OCI-LY7 (cell line): ENCODE measurements at regions of chr15 and their contacts with region 1.

Region 1: GRCh38 chr15:85330901-85331588 is 49.4 kb upstream of the AKAP13 start:
- DNase-seq: peak; percentile 96
- H3K4me3 ChIP-seq: peak overlapping the region; percentile 68
- H3K27ac ChIP-seq: peak overlapping the region; percentile 99
- H3K4me1 ChIP-seq: peaks cover 64% of the 10 kb centered on the region
- CTCF ChIP-seq: peak; percentile 95

Region 2: DNA sequence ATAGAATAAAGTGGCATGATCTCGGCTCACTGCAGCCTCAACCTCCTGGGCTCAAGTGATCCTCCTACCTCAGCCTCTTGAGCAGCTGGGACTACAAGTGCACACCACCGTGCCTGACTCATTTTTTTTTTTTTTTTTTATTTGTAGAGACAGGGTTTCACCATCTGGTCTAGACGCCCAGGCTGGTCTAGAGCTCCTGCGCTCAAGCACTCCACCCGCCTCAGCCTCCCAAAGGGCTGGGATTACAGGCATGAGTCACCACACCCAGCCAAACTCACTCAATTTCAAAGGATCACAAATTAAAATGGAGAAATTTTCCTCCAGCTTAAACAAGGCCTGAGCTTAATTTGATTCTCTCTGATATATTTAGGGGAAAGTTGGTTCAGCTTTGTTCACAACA is 645.7 kb before region 1 on chr15:
- CTCF ChIA-PET with region 1: no interaction called
- POLR2A ChIA-PET with region 1: no interaction called
- intact Hi-C with region 1: no loop called
- DNase-seq: no peak
- H3K4me3 ChIP-seq: no peak overlapping the region
- H3K27ac ChIP-seq: no peak overlapping the region
- H3K4me1 ChIP-seq: peaks cover 7% of the 10 kb centered on the region
- CTCF ChIP-seq: no peak

Region 3: DNA sequence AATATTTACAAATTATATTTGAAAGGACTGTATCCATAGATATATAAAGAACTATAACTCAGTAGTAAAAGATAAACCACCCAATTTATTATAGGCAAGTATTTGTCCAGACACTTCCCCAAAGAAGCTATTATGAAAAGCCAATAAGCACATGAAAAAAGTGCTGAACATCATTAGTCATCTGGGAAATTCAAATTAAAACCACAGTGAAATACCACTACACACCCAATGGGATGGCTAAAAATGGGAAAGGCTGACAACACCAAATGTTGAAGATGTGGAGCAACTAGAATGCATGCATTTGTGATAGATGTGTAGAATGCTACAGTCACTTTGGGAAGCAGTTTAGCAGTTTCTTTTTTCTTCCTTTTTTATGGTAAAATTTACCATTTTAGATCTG is 202.4 kb before region 1 on chr15:
- CTCF ChIA-PET with region 1: no interaction called
- POLR2A ChIA-PET with region 1: no interaction called
- intact Hi-C with region 1: no loop called
- DNase-seq: no peak
- H3K4me3 ChIP-seq: no peak overlapping the region
- H3K27ac ChIP-seq: no peak overlapping the region
- H3K4me1 ChIP-seq: no peaks in the 10 kb centered on the region
- CTCF ChIP-seq: no peak

Region 4: DNA sequence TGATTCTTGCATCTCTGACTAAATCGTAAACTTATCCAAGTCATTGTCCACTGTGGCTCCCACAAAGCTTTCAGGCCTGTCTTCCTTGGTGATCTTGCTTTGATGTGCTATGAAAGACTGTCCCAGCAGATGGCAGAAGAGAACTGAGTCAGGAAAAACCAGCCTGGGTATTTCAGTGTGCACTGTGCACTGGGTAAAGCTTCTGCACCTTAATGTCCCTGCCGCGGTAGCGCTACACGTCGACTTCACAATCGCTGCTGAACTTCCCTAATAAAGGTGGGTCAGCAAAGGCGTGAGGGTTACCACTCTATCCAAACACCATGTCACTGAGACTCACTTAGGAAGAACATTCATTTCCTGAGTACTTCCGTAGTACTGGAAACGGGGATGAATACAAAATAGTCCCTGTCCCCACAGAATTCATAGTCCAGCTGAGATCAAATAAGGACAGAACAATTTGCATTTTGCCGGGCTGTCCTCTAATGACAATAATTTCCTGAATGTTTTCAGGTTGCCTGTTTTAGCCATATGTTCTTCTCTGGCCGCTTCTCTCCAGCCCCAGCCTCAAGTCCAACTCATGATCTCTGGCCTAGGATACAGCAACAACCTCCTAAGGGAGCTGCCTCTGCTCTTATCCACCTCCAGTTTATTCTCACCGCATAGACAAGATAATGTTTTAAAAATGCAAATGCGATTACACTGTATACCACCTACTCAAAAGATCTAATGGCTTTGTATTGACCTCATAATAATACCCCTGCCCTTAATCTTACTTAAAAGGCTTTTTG is 34.2 kb before region 1 on chr15:
- CTCF ChIA-PET with region 1: interaction called, 8 read pairs
- POLR2A ChIA-PET with region 1: interaction called, 12 read pairs
- intact Hi-C with region 1: loop called (anchors 1 kb)
- DNase-seq: peak; percentile 91
- H3K4me3 ChIP-seq: peak overlapping the region; percentile 37
- H3K27ac ChIP-seq: no peak overlapping the region
- H3K4me1 ChIP-seq: peaks cover 32% of the 10 kb centered on the region
- CTCF ChIP-seq: peak; percentile 93

Region 5: DNA sequence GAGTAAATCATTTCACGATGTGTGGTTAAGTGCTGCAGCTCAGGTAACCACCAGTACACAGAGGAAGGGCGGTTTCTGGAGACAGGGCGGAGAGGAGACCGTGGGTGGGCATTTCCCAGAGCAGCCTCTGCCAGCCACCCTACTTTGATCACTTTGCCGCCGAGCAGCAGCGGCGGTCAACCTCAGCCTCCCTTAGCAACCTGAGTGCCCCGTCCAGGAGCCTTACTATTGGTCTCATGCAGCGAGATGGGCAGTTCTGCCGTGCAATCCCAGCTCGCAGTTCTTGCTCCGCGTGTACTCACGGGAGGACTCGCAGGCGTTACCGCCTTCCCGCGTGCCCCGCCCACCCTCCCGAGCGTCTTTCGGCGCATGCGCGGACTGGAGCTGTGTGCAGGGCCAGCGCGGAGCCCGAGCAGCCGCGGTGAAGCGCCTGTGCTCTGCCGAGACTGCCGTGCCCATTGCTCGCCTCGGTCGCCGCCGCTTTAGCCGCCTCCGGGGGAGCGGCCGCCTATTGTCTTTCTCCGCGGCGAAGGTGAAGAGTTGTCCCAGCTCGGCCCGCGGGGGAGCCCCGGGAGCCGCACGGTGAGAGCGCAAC is 49.3 kb after region 1 on chr15 and contains the start of gene AKAP13:
- CTCF ChIA-PET with region 1: interaction called, 4 read pairs
- POLR2A ChIA-PET with region 1: interaction called, 39 read pairs
- intact Hi-C with region 1: loop called (anchors 1 kb)
- DNase-seq: peak; percentile 100
- H3K4me3 ChIP-seq: peak within 1 kb of the TSS; percentile 86
- H3K27ac ChIP-seq: peak within 1 kb of the TSS; percentile 88
- H3K4me1 ChIP-seq: peaks cover 32% of the 10 kb centered on the region
- CTCF ChIP-seq: no peak
- total RNA-seq, gene AKAP13: 124 and 140 TPM in 2 replicates

Region 6: GRCh38 chr15:85412956-85413854 is 82.2 kb after region 1 on chr15:
- CTCF ChIA-PET with region 1: interaction called, 24 read pairs
- POLR2A ChIA-PET with region 1: interaction called, 109 read pairs
- intact Hi-C with region 1: loop called (anchors 1 kb)
- DNase-seq: peak; percentile 90
- H3K4me3 ChIP-seq: peak overlapping the region; percentile 49
- H3K27ac ChIP-seq: peak overlapping the region; percentile 71
- H3K4me1 ChIP-seq: peaks cover 72% of the 10 kb centered on the region
- CTCF ChIP-seq: peak; percentile 54; the same call in 1 of the 2 replicates

Region 7: DNA sequence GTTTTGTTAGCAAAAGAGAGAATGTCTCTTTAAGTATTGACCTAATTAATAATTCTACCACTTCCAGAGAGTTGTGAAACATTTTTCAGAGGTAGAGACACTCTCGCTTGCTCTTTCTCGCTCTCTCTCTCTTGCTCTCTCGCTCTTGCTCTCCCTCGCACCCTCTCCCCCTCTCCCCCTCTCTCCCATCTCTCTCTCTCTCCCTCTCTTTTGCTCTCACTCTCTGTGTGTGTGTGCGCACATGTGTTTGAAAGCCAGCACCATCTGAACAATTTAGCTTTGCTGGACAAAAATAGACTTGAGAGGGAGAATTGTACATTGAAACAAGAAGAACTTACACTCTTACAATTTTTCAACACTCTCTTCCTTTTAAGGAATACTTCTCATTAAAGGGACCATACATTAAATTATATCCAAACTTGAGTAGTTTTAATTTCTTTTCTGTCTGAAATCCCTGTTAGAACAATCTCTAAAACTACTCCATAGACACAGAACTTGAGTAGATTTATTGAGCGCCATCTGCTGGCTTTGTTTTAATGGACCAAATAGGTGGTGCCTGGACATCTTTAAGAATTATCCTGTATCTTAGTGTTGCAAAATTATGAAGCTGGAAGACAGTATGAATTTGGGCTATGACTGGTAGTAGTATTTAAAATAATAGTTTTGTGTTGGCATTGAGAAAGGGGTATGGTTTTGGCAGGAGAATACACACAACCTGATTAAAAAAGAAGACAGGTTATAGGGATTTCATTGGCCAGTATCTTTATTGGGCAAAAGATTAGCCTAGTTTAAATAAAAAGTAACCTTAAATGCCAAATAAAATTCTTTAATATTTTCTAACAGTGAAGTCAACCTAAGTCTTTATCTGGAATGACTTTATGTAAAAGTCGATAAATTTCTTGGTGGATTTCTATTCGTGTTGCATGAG is 174.0 kb after region 1 on chr15:
- CTCF ChIA-PET with region 1: interaction called, 3 read pairs
- POLR2A ChIA-PET with region 1: interaction called, 4 read pairs
- intact Hi-C with region 1: loop called (anchors 2 kb)
- DNase-seq: peak; percentile 78
- H3K4me3 ChIP-seq: no peak overlapping the region
- H3K27ac ChIP-seq: peak overlapping the region; percentile 27
- H3K4me1 ChIP-seq: peaks cover 31% of the 10 kb centered on the region
- CTCF ChIP-seq: peak; percentile 99

Region 8: DNA sequence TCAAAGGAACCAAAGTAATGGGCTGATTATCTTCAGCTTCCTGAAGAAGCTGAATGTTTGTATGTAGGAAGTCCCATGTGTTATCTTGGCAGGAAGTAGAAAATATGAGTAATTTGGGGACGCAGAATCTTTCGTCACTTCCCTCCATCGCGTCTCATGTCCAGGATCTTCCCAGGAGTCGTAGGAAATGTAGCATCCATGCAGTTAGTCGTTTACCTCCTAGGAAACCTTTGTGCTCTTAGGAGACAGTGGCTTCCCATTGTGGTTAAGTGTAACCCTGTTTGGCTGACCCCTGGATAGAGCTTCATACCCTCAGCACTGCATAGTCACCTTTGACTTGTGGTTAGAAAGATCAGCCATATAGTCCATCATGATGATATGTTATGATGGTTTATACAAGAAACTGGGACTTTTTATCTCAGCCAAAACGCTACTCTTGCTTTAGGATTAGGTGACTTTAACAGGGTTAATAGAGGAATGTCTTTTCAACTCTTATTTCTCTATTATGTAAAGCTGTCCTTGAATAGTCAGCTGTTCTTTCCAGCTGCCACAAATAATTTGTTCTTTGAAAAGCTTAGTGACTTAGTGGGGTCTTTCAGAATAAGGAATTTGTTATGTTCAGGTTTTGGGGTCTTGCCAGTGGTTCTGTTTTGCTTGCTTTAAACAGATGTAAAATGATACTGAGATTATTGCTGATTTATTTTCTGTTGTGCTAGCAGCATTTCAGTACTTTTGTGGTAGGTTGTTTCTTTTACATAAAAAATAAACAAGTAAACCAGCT is 371.5 kb after region 1 on chr15:
- CTCF ChIA-PET with region 1: interaction called, 3 read pairs
- POLR2A ChIA-PET with region 1: no interaction called
- intact Hi-C with region 1: loop called (anchors 5 kb)
- DNase-seq: no peak
- H3K4me3 ChIP-seq: peak overlapping the region; percentile 52
- H3K27ac ChIP-seq: peak overlapping the region; percentile 81
- H3K4me1 ChIP-seq: peaks cover 80% of the 10 kb centered on the region
- CTCF ChIP-seq: no peak